CD8-positive, alpha-beta memory T cell (primary cell): ENCODE measurements at regions of chr17 and their contacts with region 1.

Region 1: GRCh38 chr17:75749545-75750389 is 15.2 kb downstream of the GALK1 start:
- DNase-seq: peak; percentile 76 to 89 (median 83)
- H3K4me3 ChIP-seq: no peak overlapping the region
- H3K4me3 Mint-ChIP-seq: peak overlapping the region in 4 of 7 donors; percentile 0 to 40 (median 24)
- H3K27ac ChIP-seq: no peak overlapping the region
- H3K27ac Mint-ChIP-seq: no peak overlapping the region
- H3K4me1 ChIP-seq: peaks cover 17% of the 10 kb centered on the region
- H3K4me1 Mint-ChIP-seq: peaks cover 13 to 21% (median 14%) of the 10 kb centered on the region in 3 donors
- H3K27me3 ChIP-seq: no peaks in the 10 kb centered on the region
- H3K27me3 Mint-ChIP-seq: peaks cover 0 to 4% of the 10 kb centered on the region in 2 donors

Region 2: GRCh38 chr17:75549221-75550138 is 200.3 kb before region 1 on chr17:
- CTCF ChIA-PET with region 1: no interaction called
- POLR2A ChIA-PET with region 1: no interaction called
- DNase-seq: no peak
- H3K4me3 ChIP-seq: no peak overlapping the region
- H3K4me3 Mint-ChIP-seq: no peak overlapping the region
- H3K27ac ChIP-seq: no peak overlapping the region
- H3K27ac Mint-ChIP-seq: peak overlapping the region in 1 of 8 donors; percentile 46
- H3K4me1 ChIP-seq: no peaks in the 10 kb centered on the region
- H3K4me1 Mint-ChIP-seq: no peaks in the 10 kb centered on the region
- H3K27me3 ChIP-seq: no peaks in the 10 kb centered on the region
- H3K27me3 Mint-ChIP-seq: no peaks in the 10 kb centered on the region

Region 3: DNA sequence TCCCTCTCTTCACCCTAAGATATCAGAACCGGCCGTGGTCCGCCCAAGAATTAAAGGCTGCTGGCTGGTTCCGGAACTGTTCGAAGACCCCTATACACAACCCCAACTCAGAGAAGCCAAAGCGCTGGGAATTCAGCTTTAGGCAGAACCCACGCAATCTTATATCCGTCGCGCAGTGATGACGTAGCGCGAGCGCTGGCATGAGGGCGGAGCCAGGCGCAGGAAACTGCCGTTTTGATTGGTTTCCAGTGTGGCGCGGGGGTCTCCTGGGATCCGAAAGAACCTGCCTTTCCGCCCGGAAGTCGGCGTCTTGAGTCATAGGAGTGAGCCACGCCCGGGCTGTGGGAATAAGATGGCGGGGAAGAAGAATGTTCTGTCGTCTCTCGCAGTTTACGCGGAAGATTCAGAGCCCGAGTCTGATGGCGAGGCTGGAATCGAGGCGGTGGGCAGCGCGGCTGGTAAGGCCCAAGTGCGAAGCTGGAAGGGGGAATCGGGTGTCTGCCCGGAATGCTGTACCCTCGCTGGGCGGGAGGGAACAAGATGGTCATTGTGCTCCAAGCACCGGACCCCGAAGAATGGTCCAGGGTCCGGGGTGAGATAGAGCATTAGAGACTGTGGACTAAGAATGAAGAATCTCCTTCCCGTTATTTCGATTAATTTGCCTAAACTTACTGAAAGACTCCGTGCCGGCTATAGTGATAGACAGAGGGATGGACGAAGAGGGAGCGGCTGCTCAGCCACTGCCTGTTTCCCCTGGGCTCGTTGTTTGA is 82.6 kb before region 1 on chr17 and contains the starts of genes RECQL5 and SAP30BP:
- CTCF ChIA-PET with region 1: interaction called, 77 read pairs
- POLR2A ChIA-PET with region 1: no interaction called
- DNase-seq: peak; percentile 94 to 99 (median 97)
- H3K4me3 ChIP-seq: peak within 1 kb of the TSS; percentile 98
- H3K4me3 Mint-ChIP-seq: peak within 1 kb of the TSS in 5 of 7 donors; percentile 23 to 68 (median 51)
- H3K27ac ChIP-seq: peak within 1 kb of the TSS; percentile 96
- H3K27ac Mint-ChIP-seq: peak within 1 kb of the TSS in 3 of 8 donors; percentile 53 to 76 (median 75)
- H3K4me1 ChIP-seq: peaks cover 28% of the 10 kb centered on the region
- H3K4me1 Mint-ChIP-seq: peaks cover 16 to 21% (median 20%) of the 10 kb centered on the region in 3 donors
- H3K27me3 ChIP-seq: no peaks in the 10 kb centered on the region
- H3K27me3 Mint-ChIP-seq: no peaks in the 10 kb centered on the region
- total RNA-seq, gene RECQL5: 28.5 to 30.3 TPM
- total RNA-seq, gene SAP30BP: 98.0 to 111 TPM

Region 4: GRCh38 chr17:75720725-75721462 is 28.9 kb before region 1 on chr17 and contains the start of gene ITGB4:
- CTCF ChIA-PET with region 1: interaction called, 19 read pairs
- POLR2A ChIA-PET with region 1: no interaction called
- DNase-seq: peak; percentile 58 to 77 (median 66)
- H3K4me3 ChIP-seq: peak within 1 kb of the TSS; percentile 56
- H3K4me3 Mint-ChIP-seq: peak within 1 kb of the TSS; percentile 73 to 85 (median 78)
- H3K27ac ChIP-seq: no peak within 1 kb of the TSS
- H3K27ac Mint-ChIP-seq: peak within 1 kb of the TSS in 4 of 8 donors; percentile 47 to 73 (median 62)
- H3K4me1 ChIP-seq: no peaks in the 10 kb centered on the region
- H3K4me1 Mint-ChIP-seq: peaks cover 4 to 5% (median 4%) of the 10 kb centered on the region in 3 donors
- H3K27me3 ChIP-seq: peaks cover 4% of the 10 kb centered on the region
- H3K27me3 Mint-ChIP-seq: peaks cover 4 to 11% of the 10 kb centered on the region in 2 donors
- total RNA-seq, gene ITGB4: 1.8 to 2.1 TPM

Region 5: DNA sequence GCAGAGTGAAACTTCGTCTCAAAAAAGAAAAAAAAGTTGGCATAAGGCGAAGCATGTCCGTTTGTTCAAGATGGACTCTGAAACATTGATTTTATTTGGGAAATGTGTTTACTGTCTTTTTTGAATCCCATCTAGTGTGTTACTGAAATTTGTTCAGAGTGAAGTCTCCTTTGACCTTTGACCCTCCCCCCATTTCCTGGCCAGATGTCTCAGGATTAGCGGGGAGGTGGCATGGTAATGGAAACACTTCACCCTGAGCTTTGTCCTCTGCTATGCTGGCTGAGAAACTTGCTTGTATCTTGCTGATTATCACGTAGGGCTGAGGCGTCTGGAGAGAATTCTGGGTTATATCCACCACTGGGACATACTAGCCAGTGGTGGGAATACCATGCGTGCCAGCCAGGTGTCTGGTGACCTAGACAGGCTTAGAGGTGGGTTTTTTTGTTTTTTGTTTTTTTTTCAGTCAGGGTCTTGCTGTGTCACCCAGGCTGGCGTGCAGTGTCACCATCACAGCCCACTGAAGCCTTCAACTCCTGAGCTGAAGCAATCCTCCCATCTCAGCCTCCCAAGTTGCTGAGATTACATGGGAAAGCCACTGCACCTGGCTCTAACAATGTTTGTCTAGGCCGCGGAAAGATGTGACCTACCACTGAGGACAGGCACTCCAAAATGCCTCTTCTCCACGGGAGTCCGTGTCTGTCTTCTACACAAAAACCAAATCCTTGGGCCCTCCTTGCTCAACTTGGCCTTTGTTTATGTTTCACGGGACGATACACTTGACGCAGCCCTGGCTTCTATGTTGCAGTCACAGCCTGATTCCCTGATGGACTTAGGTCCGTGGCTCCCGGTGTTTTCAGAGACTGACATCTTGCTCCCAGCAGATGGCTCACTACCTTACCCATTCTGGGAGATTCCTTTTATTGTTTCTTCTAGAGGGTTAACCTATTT is 21.8 kb after region 1 on chr17:
- CTCF ChIA-PET with region 1: interaction called, 63 read pairs
- POLR2A ChIA-PET with region 1: interaction called, 14 read pairs
- DNase-seq: no peak
- H3K4me3 ChIP-seq: no peak overlapping the region
- H3K4me3 Mint-ChIP-seq: peak overlapping the region in 1 of 7 donors; percentile 2
- H3K27ac ChIP-seq: no peak overlapping the region
- H3K27ac Mint-ChIP-seq: no peak overlapping the region
- H3K4me1 ChIP-seq: peaks cover 7% of the 10 kb centered on the region
- H3K4me1 Mint-ChIP-seq: peaks cover 13 to 18% (median 15%) of the 10 kb centered on the region in 3 donors
- H3K27me3 ChIP-seq: no peaks in the 10 kb centered on the region
- H3K27me3 Mint-ChIP-seq: no peaks in the 10 kb centered on the region

Region 6: DNA sequence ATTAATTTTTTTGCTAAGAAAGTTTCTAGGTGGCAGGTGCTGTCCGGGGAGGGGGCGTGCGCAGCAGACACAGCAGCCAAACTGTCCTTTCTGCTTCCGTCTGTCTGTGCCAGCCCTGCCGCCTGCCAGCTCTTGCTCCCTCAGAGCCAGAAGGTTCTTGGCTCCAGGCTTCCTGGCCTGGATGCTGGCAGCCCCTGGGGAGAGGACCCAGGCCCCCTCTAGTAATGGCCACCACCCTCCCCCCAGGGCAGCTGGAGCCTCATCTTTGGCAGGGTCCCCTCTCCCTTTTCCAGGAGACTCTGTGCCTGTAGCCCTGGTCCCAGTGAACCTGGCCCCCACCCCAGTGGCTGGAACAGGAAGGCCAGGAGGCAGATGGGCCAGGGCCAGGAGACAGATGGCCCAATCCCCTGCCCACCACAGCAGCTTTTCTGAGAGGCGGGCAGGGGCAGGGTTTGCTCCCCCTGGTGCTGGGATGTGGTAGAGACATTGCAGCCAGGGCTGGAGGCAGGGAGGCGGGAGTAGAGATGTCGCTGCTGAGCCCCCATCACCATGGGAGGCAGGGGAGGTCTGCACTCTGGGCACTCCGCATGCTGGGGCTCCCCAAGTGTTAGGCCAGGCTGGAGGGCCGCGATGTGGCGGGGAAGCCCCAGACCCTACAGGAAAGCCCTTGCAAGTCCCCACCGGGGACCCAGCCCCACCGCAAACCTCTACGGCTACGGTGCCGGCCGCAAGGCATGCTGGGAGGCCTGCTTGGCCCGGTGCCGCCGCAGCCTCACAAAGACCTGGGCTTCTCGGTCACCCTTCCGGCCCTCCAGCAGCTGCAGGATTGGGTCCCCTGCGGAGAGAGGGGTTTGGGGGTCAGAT is 77.7 kb after region 1 on chr17:
- CTCF ChIA-PET with region 1: interaction called, 14 read pairs
- POLR2A ChIA-PET with region 1: interaction called, 3 read pairs
- DNase-seq: peak; percentile 58 to 83 (median 72)
- H3K4me3 ChIP-seq: peak overlapping the region; percentile 26
- H3K4me3 Mint-ChIP-seq: peak overlapping the region; percentile 62 to 85 (median 65)
- H3K27ac ChIP-seq: peak overlapping the region; percentile 57
- H3K27ac Mint-ChIP-seq: peak overlapping the region; percentile 61 to 100 (median 94)
- H3K4me1 ChIP-seq: peaks cover 17% of the 10 kb centered on the region
- H3K4me1 Mint-ChIP-seq: peaks cover 15 to 22% (median 19%) of the 10 kb centered on the region in 3 donors
- H3K27me3 ChIP-seq: no peaks in the 10 kb centered on the region
- H3K27me3 Mint-ChIP-seq: no peaks in the 10 kb centered on the region

Region 7: GRCh38 chr17:75864448-75864871 is 114.7 kb after region 1 on chr17:
- CTCF ChIA-PET with region 1: interaction called, 14 read pairs
- POLR2A ChIA-PET with region 1: no interaction called
- DNase-seq: peak; percentile 19 to 66 (median 47)
- H3K4me3 ChIP-seq: peak overlapping the region; percentile 5
- H3K4me3 Mint-ChIP-seq: peak overlapping the region; percentile 33 to 79 (median 69)
- H3K27ac ChIP-seq: peak overlapping the region; percentile 71
- H3K27ac Mint-ChIP-seq: peak overlapping the region; percentile 85 to 99 (median 92)
- H3K4me1 ChIP-seq: peaks cover 16% of the 10 kb centered on the region
- H3K4me1 Mint-ChIP-seq: peaks cover 22 to 30% (median 26%) of the 10 kb centered on the region in 3 donors
- H3K27me3 ChIP-seq: no peaks in the 10 kb centered on the region
- H3K27me3 Mint-ChIP-seq: peaks cover 0 to 2% of the 10 kb centered on the region in 2 donors